Right ventricle myocardium inferior (tissue), 1 donor: ENCODE measurements at regions of chr15 and their contacts with region 1.

Region 1: DNA sequence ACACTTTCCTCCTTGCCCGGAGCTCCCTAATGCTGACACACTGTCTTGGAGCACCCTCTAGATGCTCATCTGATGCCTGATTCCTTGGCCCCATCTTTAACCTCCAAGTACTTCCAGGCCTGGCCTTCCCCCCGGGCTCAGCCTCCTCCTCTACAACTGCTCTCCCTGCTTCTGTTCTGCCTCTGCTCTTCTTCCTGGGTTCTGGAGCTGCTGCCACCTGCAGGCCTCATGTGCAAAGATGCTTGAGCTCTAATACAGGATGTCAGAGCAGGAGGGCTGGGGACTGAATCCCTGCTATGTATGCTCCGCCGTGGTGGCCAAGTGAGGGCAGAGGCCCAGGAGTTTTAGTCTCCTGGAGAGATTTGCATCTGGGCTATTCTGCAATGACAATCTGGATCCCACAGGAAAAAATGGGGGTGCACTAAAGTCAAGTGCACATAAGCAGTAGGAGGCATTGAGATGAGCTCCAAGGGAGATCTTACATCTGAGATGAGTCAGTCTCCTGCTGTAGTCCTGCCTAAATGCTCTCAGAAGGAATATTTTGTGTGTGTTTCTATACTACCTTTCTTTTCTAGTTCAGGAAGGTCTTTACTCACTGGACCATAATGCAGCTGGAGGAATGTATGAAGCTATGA is 296.3 kb downstream of the UACA start:
- DNase-seq: no peak
- ATAC-seq: no peak

Region 2: GRCh38 chr15:69729161-69729748 is 737.8 kb before region 1 on chr15:
- intact Hi-C with region 1: loop called (anchors 5 kb)
- DNase-seq: no peak
- ATAC-seq: no peak

Region 3: DNA sequence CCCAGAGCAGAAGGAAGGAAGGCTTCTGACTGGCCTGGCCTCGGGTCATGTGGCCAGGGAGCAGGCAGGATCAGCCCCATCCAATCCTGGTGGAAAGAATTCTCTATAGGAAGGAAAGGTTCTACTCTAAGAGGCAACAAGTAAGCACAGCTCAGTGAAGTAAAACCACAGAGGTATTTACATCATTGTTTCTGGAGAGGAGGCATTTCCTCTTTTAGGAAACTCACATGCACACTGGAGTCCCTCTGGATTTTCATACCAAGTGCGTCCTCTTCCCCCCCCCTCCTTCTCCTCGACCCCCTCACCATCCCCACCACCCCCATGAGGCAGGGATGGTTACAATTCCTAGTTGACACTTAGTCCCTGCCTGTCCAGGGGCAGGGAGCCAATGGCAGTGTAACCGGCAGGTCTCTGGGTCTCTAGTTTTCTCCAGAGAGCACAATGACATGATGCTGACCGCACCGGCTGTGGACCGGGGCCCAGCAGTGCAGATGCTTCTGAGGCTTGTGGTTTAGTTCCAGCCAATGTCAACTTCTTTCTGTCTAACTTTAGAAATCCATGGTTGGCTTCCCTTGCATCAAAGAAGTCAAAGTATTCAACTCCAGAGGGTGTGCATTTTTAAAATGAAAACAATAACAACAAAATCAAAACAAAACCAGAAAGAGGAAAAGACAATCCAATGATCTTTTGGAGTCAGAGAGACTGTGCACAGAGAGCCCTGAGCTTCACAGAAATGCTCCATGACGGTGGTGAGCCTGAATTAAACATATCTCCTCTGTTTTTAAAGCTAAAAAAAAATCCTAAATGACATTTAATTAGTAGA is 138.9 kb before region 1 on chr15:
- intact Hi-C with region 1: no loop called
- DNase-seq: no peak
- ATAC-seq: peak; percentile 62